OCI-LY7 (cell line): ENCODE measurements at regions of chr3 and their contacts with region 1.

Region 1: DNA sequence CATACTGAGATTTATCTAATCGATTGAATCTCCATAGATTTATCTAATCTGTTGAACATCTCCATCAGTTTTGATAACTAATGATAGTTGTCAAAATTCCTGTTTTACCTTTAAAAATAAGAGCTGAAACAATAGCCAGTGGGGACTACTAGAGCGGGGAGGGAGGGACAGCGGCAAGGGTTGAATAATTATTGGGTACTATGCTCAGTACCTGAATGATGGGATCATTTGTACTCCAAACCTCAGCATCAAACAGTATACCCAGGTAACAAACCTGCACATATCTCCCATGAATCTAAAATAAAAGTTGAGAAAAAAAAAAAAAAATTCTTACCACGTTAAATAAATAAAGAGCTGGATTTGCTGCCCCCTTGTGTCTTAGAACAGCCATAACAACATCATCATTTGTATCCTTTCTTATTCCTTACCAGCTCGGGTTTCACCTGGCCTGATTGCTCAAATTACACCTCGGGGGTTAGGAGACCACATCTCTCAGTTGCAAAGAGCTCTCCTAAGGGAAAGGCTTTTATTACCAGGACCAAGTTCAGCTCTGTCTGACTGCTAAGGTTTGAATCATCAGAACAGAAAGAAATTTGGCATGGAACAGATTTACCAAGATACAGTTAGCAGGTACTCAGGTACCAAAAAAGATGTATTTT is 25.7 kb upstream of the RPL39L start:
- DNase-seq: peak; percentile 79
- H3K4me3 ChIP-seq: no peak overlapping the region
- H3K27ac ChIP-seq: no peak overlapping the region
- H3K4me1 ChIP-seq: no peaks in the 10 kb centered on the region
- CTCF ChIP-seq: peak; percentile 92

Region 2: GRCh38 chr3:186617038-186617946 is 547.7 kb before region 1 on chr3:
- CTCF ChIA-PET with region 1: no interaction called
- POLR2A ChIA-PET with region 1: no interaction called
- intact Hi-C with region 1: loop called (anchors 5 kb)
- DNase-seq: peak; percentile 77
- H3K4me3 ChIP-seq: peak overlapping the region; percentile 12
- H3K27ac ChIP-seq: no peak overlapping the region
- H3K4me1 ChIP-seq: peaks cover 18% of the 10 kb centered on the region
- CTCF ChIP-seq: peak; percentile 92

Region 3: DNA sequence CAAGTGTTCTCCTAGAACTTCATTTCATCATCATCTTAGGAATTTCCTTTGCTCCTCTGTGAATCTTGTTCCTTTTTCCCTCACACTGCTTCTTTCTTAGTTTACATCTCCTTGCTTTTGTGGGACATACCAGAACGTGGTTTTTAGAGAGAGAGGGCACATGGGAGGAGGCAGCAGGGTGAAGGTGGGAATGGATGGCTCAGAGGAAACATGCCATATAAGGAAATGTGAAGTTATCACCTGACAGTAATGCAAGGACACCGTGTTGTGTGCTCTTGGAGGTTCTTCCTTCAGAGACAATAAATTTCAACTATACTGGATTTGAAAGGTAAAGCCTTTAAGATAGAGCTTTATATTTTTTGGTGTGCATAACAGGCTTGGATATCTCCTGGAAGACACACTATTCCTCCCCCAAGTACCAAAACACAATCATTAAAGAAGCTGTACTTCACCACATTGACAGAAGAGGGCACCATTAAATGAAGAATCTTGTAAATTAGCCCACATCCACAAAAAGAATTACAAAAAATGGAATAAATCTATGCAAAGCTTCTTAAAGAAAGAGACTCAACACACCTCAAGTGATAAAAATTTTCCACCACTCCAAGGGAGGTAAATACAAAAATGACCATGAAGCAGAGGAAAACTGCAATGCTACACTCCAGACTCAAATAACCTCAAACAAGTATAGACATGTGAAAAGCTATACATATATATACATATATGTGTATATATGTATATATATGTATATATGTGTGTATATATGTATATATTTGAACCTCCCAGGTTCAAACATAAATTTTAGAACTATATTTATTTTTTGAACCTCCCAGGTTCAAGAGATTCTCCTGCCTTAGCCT is 51.9 kb before region 1 on chr3:
- CTCF ChIA-PET with region 1: interaction called, 8 read pairs
- POLR2A ChIA-PET with region 1: interaction called, 12 read pairs
- intact Hi-C with region 1: loop called (anchors 1 kb)
- DNase-seq: peak; percentile 55
- H3K4me3 ChIP-seq: no peak overlapping the region
- H3K27ac ChIP-seq: no peak overlapping the region
- H3K4me1 ChIP-seq: peaks cover 14% of the 10 kb centered on the region
- CTCF ChIP-seq: peak; percentile 91

Region 4: DNA sequence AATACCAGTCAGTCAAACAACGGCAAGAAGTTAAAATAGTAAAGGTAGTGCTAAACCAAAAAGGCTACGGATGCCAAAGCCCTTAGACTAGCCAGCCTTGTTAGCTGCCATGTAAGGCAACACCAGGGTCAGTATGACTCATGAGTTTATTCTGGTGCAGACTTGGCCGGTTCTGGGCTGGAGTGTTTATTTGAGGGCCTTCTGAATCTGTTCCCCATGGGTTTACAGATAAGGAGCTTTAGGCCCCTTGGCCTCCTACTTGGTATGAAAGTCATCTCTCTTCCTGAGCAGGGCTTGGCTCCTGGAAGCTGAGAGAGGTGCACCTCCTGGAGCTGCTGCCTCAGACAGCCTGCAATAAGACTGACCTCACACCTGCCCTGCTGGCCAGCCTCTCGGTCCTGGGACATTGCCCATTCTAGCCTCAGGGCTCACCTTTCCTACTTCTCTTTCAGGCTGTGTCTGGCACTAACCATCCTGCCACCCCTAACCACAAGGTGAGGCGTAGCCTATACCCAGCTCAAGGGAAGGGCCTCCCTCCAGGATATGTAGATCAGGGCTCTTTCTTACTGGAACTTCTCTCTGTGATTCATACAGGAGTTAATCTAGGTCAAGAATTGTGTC is 21.9 kb after region 1 on chr3:
- CTCF ChIA-PET with region 1: no interaction called
- POLR2A ChIA-PET with region 1: no interaction called
- intact Hi-C with region 1: no loop called
- DNase-seq: no peak
- H3K4me3 ChIP-seq: no peak overlapping the region
- H3K27ac ChIP-seq: no peak overlapping the region
- H3K4me1 ChIP-seq: peaks cover 40% of the 10 kb centered on the region
- CTCF ChIP-seq: no peak

Region 5: DNA sequence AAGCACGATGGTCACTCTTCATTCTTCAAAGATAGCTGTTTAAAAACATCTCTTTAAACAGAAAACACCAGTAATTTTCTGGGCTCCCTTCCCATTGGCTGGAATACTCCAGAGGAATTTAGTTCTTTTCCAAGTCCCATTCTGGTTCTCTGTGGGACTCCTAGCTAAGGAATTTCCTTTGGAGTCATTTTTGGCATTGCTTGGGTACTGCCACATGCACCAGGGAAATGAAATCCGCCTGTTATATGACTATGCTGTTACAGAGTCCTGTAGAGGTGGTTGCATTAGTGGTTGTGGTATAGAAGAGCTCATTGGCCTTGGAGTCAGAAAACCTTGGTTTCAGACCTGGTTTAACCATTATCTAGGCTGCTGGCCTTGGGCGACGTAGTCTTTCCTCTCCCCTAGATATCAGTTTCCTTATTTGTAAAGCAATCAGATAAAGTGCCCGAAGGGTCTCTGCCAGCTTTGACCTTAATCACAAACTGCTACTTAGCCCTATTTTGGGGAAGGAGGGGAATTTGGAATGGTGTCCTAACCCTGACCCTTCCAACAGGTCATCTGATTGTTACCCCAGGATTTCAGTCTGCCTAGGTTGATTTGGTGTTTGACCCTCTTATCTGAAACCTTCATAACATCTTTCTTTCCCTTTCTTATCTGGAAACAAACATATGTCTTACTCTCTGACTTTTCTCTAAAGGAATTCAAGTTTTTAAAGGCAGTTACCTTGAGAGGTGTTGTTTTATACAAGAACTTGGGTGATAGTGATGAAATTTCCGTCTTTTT is 45.7 kb after region 1 on chr3:
- CTCF ChIA-PET with region 1: no interaction called
- POLR2A ChIA-PET with region 1: interaction called, 4 read pairs
- intact Hi-C with region 1: loop called (anchors 2 kb)
- DNase-seq: no peak
- H3K4me3 ChIP-seq: no peak overlapping the region
- H3K27ac ChIP-seq: no peak overlapping the region
- H3K4me1 ChIP-seq: no peaks in the 10 kb centered on the region
- CTCF ChIP-seq: no peak